ENCODE measurements at regions of chr1 and their contacts with region 1.

Region 1: GRCh38 chr1:182143154-182143657 is 81.7 kb upstream of the ZNF648 start:
- DNase-seq: peak; percentile 63
- CTCF ChIP-seq: peak; percentile 93

Region 2: DNA sequence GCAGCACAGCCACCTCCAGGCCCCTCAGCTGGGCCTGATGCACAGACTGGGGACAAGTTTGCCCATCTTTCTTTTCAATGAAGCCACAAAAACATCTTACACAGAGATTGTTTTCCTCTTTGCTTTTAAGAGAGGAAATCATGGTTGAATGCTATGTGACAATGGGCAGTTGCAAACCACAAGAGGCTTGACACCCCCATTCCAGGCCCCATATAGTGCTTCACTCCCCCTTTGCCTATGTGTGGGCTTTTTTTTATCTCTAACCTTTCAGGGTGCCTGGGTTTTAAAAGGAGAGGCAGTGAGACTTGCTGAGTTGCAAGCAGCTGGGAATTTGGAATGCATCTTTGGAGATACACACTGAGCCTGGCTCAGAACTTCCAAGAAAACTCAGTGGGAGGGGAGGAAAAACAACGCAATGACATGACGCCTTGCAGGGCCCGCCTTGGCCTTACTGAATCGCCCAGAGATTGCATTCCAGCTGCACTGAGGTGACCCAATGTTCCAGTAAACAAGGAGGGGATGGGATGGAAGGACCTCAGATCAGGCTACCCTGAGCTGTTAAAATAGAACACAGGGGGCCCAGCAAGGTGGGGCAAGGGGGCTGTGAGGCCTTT is 63.5 kb after region 1 on chr1:
- in situ Hi-C with region 1: no loop called
- DNase-seq: no peak
- CTCF ChIP-seq: no peak

Region 3: DNA sequence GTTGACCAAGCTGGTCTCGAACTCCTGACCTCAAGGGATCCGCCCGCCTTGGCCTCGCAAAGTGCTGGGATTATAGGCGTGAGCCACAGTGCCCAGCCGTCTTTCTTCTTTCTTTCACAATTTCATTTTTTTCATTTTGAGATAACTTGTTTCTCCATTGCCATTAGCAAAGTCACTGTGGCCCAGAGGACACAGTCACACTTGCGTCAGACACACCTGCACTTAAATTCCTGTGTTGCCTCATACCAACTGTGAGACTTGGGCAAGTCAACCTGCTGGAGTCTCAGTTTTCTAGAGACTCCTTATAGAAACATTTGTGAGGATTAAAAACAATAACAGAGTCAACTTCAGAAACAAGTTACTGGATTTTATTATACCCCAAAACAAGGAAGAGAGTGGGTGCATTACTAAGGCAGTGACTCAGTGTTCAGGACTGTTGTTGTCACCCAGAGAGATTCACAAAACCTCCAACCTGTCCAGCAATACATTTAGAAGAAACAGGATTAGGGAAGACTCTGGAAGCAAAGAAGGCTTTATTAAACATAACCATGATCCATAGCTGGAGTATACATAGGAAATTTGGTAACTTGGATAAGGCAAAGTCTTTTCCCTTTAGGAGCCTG is 254.7 kb after region 1 on chr1:
- in situ Hi-C with region 1: loop called (anchors 5 kb)
- DNase-seq: no peak
- CTCF ChIP-seq: no peak

Region 4: GRCh38 chr1:182677397-182678098 is 534.3 kb after region 1 on chr1:
- in situ Hi-C with region 1: no loop called
- DNase-seq: peak; percentile 81
- CTCF ChIP-seq: no peak